HEK293T (cell line): ENCODE measurements at regions of chr9 and their contacts with region 1.

Region 1: DNA sequence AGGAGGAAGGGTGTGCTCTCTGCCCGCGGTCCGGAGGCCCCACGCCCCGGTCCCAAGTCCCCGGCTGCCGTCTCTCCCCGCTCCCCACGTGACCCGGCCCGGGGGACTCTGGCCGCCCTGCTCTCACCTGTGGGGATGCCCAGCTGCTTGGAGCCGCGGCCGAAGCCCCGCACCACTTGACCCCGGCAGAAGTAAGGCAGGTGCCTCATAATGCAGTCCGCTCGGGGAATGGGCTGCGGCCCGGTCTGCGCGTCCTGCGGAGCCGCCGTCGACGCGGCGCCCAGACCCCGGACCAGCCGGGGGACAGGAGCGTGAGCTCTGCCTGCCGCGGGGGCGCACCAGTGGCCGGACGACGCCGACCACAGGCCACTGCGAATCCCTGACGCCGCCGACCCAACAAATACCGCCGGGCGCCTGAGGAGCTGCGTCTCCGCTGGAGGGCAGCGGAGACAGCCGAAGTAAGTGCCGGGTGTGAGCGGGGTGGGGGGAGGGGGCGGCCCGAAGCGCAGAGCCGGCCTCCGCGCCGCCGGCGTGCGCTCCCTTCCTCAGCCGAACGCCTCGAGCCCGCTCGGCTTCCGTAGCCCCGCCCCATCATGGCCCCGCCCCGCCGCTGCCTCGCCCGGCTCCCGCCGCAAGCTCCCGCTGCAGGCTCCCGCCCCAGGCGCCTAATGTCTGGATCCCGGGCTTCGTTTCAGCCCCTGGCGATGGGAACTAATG is at the start of gene RFK:
- DNase-seq: peak; percentile 93

Region 2: DNA sequence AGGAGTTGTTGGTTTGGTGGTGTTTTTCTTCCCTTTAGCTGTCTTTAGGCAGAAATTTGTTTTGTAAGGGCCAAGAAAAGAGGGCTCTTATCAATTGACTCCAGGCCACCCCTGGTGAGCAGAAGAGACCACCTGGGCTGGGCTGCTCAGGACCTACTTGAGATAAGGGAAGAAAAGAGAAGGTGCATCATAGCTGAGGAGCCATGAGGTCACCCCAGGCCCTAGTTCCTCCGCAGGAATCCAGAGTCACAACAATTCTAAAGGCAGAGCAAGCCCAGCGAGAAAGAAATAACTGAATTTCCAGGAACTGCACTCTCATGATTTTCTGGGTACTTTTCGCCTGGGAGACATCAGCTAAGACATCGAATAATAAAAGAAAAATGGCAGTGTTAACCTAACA is 34.8 kb before region 1 on chr9:
- CTCF ChIA-PET with region 1: no interaction called
- POLR2A ChIA-PET with region 1: no interaction called
- DNase-seq: no peak

Region 3: GRCh38 chr9:76371901-76372300 is 22.2 kb before region 1 on chr9:
- CTCF ChIA-PET with region 1: no interaction called
- POLR2A ChIA-PET with region 1: interaction called, 12 read pairs
- DNase-seq: no peak

Region 4: DNA sequence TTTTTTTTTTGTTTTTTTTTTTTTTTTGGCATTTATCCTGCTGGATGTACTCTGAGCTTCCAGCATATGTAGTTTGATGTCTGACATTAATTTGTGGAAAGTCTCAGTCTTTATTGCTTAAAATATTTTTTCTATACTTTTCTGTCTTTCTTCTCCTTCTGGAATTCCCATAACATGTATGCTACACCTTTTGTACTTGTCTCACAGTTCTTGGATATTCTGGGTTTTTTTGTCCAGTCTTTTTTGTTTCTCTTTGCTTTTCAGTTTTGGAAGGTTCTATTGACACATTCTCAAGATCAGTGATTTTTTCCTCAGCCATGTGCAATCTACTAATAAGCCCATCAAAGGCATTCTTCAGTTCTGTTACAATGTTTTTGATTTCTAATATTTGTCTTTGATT is 19.5 kb after region 1 on chr9:
- CTCF ChIA-PET with region 1: no interaction called
- POLR2A ChIA-PET with region 1: no interaction called
- DNase-seq: no peak